Upper lobe of right lung (tissue), 1 donor: ENCODE measurements at regions of chr2 and their contacts with region 1.

Region 1: GRCh38 chr2:46385786-46386577 is 88.8 kb downstream of the EPAS1 start:
- DNase-seq: no peak
- ATAC-seq: no peak
- H3K4me3 ChIP-seq: no peak overlapping the region
- H3K27ac ChIP-seq: peak overlapping the region; percentile 48
- H3K4me1 ChIP-seq: peaks cover 9% of the 10 kb centered on the region
- H3K27me3 ChIP-seq: no peaks in the 10 kb centered on the region
- CTCF ChIP-seq: no peak

Region 2: GRCh38 chr2:46329803-46330775 is 55.9 kb before region 1 on chr2:
- intact Hi-C with region 1: no loop called
- DNase-seq: no peak
- ATAC-seq: no peak
- H3K4me3 ChIP-seq: no peak overlapping the region
- H3K27ac ChIP-seq: no peak overlapping the region
- H3K4me1 ChIP-seq: peaks cover 96% of the 10 kb centered on the region
- H3K27me3 ChIP-seq: no peaks in the 10 kb centered on the region
- CTCF ChIP-seq: no peak

Region 3: DNA sequence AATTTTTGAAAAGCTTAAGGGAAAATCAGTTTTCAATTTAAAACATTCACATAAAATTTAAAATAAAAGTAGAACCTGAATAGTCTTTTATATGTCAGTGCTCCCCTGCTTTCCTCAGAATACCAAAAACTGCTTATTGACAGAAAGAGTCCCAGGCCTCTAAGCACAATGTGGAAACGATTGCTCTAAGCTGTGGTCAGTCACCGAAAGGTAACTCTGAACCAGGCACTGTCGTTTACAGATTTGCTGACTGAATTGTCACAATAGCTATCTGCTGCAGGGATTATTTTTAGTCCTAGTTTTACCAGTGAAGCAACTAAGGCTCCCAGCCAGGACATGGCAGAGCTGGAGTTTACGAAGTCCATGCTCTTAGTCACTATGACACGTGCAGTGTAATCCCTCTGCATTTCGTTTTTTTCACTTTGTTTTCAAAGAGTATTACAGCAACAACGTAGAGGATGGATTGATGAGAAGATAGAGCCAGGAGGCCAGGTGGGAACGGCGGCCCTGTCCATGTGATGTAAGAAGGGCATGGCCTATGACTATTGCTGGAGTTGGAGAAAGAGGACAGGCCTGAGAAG is 65.2 kb after region 1 on chr2:
- intact Hi-C with region 1: loop called (anchors 10 kb)
- DNase-seq: no peak
- ATAC-seq: no peak
- H3K4me3 ChIP-seq: no peak overlapping the region
- H3K27ac ChIP-seq: no peak overlapping the region
- H3K4me1 ChIP-seq: no peaks in the 10 kb centered on the region
- H3K27me3 ChIP-seq: no peaks in the 10 kb centered on the region
- CTCF ChIP-seq: no peak

Region 4: DNA sequence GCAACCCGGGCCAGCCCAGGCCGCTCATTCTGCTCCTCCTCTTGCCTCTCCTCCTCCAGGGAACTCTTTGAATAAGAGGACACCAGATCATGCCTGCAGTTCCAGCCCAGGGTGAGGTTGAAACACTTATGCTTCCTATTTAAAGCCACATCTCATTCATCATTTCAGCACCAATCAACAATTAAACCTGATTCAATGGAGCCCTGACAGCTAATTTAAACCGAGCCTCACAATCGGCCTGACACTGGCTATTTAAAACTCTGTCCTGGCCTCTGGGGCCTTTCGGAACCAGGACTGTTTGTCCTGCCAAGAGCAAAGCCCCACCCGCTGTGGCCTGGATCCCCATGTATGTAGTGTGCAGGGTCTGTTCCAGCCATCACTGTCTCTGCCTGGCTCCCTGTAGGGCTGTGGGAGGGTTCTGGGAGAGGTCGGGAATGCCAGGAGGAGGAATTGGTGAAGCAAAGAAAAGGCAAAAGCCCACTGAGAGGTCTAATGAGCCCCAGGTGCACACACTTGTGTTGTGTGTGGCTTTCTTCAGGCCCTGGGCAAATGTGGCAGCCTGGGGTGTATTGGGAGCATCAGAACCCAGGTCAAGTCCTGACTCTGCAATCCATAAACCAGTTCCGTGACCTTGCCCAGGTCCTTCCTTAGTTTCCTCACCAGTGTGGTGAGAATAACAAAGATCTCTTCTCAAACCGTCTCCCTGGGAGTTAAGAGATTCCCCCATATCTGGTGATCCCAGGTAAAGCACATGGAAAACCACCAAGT is 432.3 kb after region 1 on chr2:
- intact Hi-C with region 1: no loop called
- DNase-seq: peak; percentile 70
- ATAC-seq: peak; percentile 77
- H3K4me3 ChIP-seq: no peak overlapping the region
- H3K27ac ChIP-seq: peak overlapping the region; percentile 63
- H3K4me1 ChIP-seq: peaks cover 46% of the 10 kb centered on the region
- H3K27me3 ChIP-seq: no peaks in the 10 kb centered on the region
- CTCF ChIP-seq: no peak